Activated T-helper 2 cell treated with anti-CD3 and anti-CD28 coated beads, Interferon-gamma antibody, Interleukin-2, Interleukin-4, amounts not matched to agents 10 μg/mL and 5 μg/mL and 100 μg/mL, durations not matched to agents 14 hours and 24 hours and 36 hours (primary cell): ENCODE measurements at regions of chr15 and their contacts with region 1.

Region 1: DNA sequence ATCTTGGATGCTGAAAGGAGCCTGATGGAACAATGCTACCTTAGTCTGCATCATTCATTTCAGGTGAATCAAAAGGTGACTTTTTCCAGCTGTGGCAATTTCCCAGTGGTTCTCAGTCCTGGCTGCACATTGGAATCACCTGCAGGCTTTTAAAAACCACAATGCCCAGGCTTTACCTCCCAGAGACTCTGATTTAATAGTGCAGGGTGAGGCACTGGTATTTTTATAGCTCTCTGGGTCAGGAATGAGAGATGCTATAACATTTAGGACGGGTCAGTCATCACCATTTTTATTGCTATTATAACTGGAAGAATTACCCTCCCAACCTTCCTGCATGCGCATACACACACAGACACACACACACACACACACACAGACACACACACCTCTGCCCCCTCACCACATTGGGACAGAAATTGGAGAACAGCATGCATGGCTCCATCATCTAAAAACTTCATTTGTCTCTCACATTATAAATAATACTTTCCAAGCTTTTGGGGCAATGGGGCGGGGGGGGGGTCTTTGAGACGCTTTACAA is 41.1 kb downstream of the LARP6 start:
- DNase-seq: no peak
- H3K4me3 Mint-ChIP-seq: no peak overlapping the region
- H3K27ac Mint-ChIP-seq: no peak overlapping the region
- H3K4me1 Mint-ChIP-seq: no peaks in the 10 kb centered on the region
- H3K27me3 Mint-ChIP-seq: peaks cover 4% of the 10 kb centered on the region

Region 2: GRCh38 chr15:70679919-70680231 is 133.0 kb before region 1 on chr15:
- intact Hi-C with region 1: loop called (anchors 2 kb)
- DNase-seq: no peak
- H3K4me3 Mint-ChIP-seq: no peak overlapping the region
- H3K27ac Mint-ChIP-seq: no peak overlapping the region
- H3K4me1 Mint-ChIP-seq: peaks cover 3% of the 10 kb centered on the region
- H3K27me3 Mint-ChIP-seq: peaks cover 43% of the 10 kb centered on the region